ENCODE measurements at regions of chr7 and their contacts with region 1.

Region 1: DNA sequence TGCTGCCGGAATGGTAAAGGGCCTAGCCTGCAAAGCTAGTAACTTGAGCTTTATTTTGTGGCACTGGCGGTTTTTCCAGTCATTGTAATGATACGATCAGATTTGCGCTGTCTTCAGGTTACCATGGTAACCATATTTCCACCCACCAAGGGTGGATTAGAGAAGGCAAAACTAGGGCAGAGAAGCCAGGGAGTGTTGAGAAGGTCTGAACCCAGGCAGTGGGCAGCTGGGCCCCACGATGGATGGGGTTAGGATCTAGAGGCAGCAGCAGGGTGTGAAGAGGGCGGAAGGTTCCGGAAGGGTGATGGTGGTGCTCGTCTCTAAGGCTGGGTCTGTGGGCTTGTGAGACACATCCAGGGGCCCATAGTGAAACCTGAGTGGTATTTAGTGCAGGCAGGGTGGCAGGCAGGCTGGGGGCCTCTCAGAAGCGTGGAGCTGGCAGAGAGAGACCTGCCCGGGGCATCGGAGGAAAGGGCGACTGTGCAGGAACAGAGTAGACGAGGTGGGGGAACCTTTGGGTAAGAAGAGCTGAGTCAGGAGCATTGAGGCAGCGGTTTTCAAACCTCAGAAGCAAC is 87.9 kb upstream of the GTF2I start:
- DNase-seq: no peak
- ATAC-seq: no peak
- H3K4me3 ChIP-seq: no peak overlapping the region
- H3K4me3 Mint-ChIP-seq: no peak overlapping the region
- H3K27ac ChIP-seq: no peak overlapping the region
- H3K27ac Mint-ChIP-seq: no peak overlapping the region
- H3K4me1 ChIP-seq: no peaks in the 10 kb centered on the region
- H3K4me1 Mint-ChIP-seq: peaks cover 2% of the 10 kb centered on the region
- H3K27me3 ChIP-seq: no peaks in the 10 kb centered on the region
- H3K27me3 Mint-ChIP-seq: peaks cover 3% of the 10 kb centered on the region
- CTCF ChIP-seq: no peak

Region 2: DNA sequence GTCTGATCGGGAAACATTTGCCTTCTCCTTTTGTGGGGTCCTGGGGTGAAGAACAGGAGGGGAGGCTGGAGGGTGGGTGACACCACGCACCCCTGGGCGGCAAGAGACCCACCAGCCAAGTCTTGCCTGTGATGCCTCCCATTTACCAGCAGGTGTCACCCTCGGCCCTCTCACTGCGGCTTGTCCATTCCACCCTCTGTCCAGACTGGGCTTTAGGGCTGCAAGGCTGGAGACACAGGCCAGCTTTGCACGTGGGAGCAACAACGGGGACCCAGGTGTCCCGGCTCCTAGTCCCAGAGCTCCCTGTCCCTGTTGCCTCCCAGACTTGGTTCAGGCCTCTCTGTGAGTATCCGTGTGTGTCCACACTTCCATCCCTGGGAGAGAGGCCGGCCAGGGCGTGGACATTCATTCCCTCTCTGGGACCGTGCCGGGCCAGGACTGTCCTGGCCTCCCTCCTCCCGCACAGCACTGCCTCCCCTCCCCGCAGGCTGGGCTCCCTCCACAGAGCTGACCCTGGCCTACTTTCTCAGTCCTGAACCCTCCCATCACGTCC is 152.1 kb before region 1 on chr7:
- CTCF ChIA-PET with region 1: interaction called, 15 read pairs
- POLR2A ChIA-PET with region 1: no interaction called
- intact Hi-C with region 1: loop called (anchors 2 kb)
- DNase-seq: peak; percentile 73
- ATAC-seq: peak; percentile 86
- H3K4me3 ChIP-seq: no peak overlapping the region
- H3K4me3 Mint-ChIP-seq: no peak overlapping the region
- H3K27ac ChIP-seq: no peak overlapping the region
- H3K27ac Mint-ChIP-seq: no peak overlapping the region
- H3K4me1 ChIP-seq: peaks cover 0 to 6% of the 10 kb centered on the region in 2 donors
- H3K4me1 Mint-ChIP-seq: no peaks in the 10 kb centered on the region
- H3K27me3 ChIP-seq: no peaks in the 10 kb centered on the region
- H3K27me3 Mint-ChIP-seq: no peaks in the 10 kb centered on the region
- CTCF ChIP-seq: peak; percentile 99

Region 3: GRCh38 chr7:74449809-74450397 is 119.7 kb before region 1 on chr7:
- CTCF ChIA-PET with region 1: interaction called, 20 read pairs
- POLR2A ChIA-PET with region 1: no interaction called
- intact Hi-C with region 1: loop called (anchors 10 kb)
- DNase-seq: peak; percentile 78
- ATAC-seq: peak; percentile 48
- H3K4me3 ChIP-seq: no peak overlapping the region
- H3K4me3 Mint-ChIP-seq: no peak overlapping the region
- H3K27ac ChIP-seq: no peak overlapping the region
- H3K27ac Mint-ChIP-seq: peak overlapping the region; percentile 37
- H3K4me1 ChIP-seq: peaks cover 16 to 21% of the 10 kb centered on the region in 2 donors
- H3K4me1 Mint-ChIP-seq: peaks cover 18% of the 10 kb centered on the region
- H3K27me3 ChIP-seq: peaks cover 0 to 15% (median 5%) of the 10 kb centered on the region in 4 experiments
- H3K27me3 Mint-ChIP-seq: peaks cover 8% of the 10 kb centered on the region
- CTCF ChIP-seq: peak; percentile 83